ENCODE measurements at regions of chr7 and their contacts with region 1.

Region 1: DNA sequence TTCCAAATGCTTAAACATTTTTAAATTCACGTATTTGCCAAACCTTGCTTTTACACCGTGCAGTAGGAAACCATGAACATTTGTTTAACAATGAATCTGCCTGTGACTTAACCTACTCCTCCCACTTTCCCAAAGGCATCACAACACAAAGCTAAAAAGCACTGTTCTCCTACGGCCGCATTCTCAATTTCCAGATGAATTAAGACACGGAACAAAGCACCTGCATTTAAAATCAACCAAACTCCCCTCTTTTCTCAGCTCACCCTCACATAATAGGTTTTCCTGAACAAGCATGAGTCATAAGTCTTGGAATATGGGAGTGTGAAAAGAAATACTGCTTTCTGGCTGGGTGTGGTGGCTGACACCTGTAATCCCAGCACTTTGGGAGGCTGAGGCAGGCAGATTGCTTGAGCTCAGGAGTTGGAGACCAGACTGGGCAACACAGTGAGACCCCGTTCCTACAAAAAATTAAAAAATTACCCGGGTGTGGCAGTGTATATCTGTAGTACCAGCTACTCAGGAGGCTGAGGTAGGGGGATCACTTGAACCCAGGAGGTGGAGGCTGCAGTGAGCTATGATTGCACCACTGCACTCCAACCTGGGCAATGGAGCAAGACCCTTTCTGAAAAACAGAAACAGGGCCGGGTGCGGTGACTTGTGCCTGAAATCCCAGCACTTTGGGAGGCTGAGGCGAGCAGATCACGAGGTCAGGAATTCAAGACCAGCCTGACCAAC is 51.7 kb upstream of the CYTH3 start:
- DNase-seq: no peak
- ATAC-seq: no peak
- H3K4me3 Mint-ChIP-seq: no peak overlapping the region
- H3K27ac Mint-ChIP-seq: no peak overlapping the region
- H3K4me1 Mint-ChIP-seq: peaks cover 4% of the 10 kb centered on the region
- H3K27me3 Mint-ChIP-seq: peaks cover 2% of the 10 kb centered on the region
- CTCF ChIP-seq: no peak

Region 2: DNA sequence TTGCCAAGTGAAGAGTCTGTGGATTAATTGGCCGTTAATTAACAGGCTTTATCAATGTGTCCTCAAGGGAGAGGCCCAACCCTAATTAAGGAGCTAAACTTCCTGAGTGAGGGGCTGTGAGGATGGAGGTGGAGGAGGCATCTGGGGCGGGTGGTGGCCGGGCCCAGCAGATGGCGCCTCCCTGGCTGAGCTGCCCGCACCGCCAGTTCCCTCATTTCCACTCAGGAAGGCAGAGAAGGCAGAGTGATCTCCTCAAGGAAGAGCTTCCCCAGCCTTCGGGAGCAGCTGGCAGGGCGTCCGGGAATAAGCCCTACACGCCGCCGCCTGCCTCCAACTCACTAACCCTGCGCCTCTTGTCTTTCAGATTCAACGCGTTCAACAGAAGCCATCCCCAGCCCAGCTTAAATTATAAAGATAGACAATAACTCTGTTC is 163.9 kb before region 1 on chr7:
- CTCF ChIA-PET with region 1: interaction called, 11 read pairs
- POLR2A ChIA-PET with region 1: no interaction called
- intact Hi-C with region 1: loop called (anchors 1 kb)
- DNase-seq: no peak
- ATAC-seq: no peak
- H3K4me3 Mint-ChIP-seq: no peak overlapping the region
- H3K27ac Mint-ChIP-seq: no peak overlapping the region
- H3K4me1 Mint-ChIP-seq: no peaks in the 10 kb centered on the region
- H3K27me3 Mint-ChIP-seq: no peaks in the 10 kb centered on the region
- CTCF ChIP-seq: no peak